SK-N-SH (cell line): ENCODE measurements at regions of chr16 and their contacts with region 1.

Region 1: GRCh38 chr16:51818342-51818944 is 667.4 kb upstream of the SALL1 start:
- DNase-seq: peak; percentile 28
- H3K4me3 ChIP-seq: peak overlapping the region in 1 of 2 experiments; percentile 49; a peak in 1 of 4 replicates
- H3K27ac ChIP-seq: no peak overlapping the region
- H3K4me1 ChIP-seq: peaks cover 0 to 3% of the 10 kb centered on the region in 2 experiments; a peak in 1 of 4 replicates
- H3K27me3 ChIP-seq: no peaks in the 10 kb centered on the region
- CTCF ChIP-seq: peak; percentile 49
- EP300 ChIP-seq: no peak
- RAD21 ChIP-seq: peak; percentile 82

Region 2: DNA sequence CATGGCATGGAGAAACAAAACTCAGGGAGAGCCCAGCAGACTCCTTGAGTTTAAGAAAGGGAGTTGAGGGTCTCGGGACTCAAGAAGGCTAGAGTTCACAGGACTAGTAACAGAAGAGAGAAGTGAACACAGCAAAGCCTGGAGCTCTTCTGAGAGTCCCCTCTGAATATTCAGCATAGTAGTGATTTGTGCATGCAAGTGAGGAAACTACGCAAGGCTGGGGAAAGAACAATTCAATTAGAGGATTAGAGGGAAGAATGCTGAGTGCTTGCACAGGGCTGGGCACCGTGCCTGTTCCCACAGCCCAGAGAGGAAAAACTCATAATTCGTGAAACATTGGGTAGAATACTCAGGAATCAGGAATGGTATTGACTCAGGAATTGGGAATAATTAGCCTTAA is 127.3 kb before region 1 on chr16:
- CTCF ChIA-PET with region 1: no interaction called
- POLR2A ChIA-PET with region 1: no interaction called
- DNase-seq: no peak
- H3K4me3 ChIP-seq: no peak overlapping the region
- H3K27ac ChIP-seq: no peak overlapping the region
- H3K4me1 ChIP-seq: no peaks in the 10 kb centered on the region
- H3K27me3 ChIP-seq: no peaks in the 10 kb centered on the region
- CTCF ChIP-seq: no peak
- EP300 ChIP-seq: no peak
- RAD21 ChIP-seq: no peak

Region 3: DNA sequence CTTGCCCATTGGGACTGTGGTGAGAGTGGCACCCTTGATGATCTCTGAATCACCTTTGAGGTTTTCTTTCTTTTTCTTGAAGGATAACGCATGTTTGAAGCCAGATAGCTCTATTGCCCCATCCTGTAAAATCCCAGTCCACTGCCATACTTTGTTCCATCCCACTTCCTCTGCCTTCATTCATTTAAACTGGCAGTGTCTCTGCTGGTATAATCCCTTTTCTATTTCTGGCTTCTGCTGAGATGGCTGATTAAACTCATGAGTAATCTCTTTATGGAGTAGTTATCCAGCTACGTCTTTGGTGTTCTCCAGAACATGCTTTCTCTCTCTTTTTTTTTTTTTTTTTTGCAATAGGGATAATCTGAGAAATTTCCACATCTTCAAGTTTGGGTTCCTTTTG is 10.9 kb before region 1 on chr16:
- CTCF ChIA-PET with region 1: interaction called, 25 read pairs
- POLR2A ChIA-PET with region 1: no interaction called
- DNase-seq: no peak
- H3K4me3 ChIP-seq: no peak overlapping the region
- H3K27ac ChIP-seq: no peak overlapping the region
- H3K4me1 ChIP-seq: no peaks in the 10 kb centered on the region
- H3K27me3 ChIP-seq: no peaks in the 10 kb centered on the region
- CTCF ChIP-seq: no peak
- EP300 ChIP-seq: no peak
- RAD21 ChIP-seq: no peak

Region 4: GRCh38 chr16:51839727-51840462 is 21.5 kb after region 1 on chr16:
- CTCF ChIA-PET with region 1: interaction called, 15 read pairs
- POLR2A ChIA-PET with region 1: no interaction called
- DNase-seq: no peak
- H3K4me3 ChIP-seq: no peak overlapping the region
- H3K27ac ChIP-seq: no peak overlapping the region
- H3K4me1 ChIP-seq: no peaks in the 10 kb centered on the region
- H3K27me3 ChIP-seq: no peaks in the 10 kb centered on the region
- CTCF ChIP-seq: no peak
- EP300 ChIP-seq: no peak
- RAD21 ChIP-seq: no peak

Region 5: DNA sequence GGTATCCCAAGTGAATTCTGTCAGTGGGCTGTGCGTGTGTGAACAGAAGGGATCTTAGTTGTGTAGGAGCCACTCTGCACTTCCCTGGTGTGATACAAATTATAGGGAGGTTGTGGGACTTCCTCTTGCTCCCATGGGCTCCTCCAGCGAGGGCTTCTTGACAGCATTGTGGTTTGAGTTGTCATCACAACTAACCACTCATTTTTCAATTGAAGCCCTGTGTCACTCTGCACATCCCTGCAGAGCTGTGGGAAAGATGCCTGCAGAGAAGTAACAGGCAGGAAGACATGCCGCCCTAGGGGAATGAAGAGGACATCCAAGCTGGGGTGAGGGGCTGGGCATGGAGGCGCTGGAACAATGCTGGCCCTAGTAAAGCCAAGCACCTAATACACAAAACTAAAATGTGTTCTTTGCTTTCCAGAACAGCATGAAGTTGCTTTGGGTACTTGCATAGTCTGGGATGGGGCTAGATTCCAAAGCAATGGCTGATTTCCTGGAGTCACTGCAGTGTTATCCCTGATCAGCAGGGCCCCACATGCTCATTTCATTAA is 36.0 kb after region 1 on chr16:
- CTCF ChIA-PET with region 1: interaction called, 10 read pairs
- POLR2A ChIA-PET with region 1: no interaction called
- DNase-seq: no peak
- H3K4me3 ChIP-seq: no peak overlapping the region
- H3K27ac ChIP-seq: no peak overlapping the region
- H3K4me1 ChIP-seq: no peaks in the 10 kb centered on the region; a peak in 1 of 4 replicates
- H3K27me3 ChIP-seq: no peaks in the 10 kb centered on the region
- CTCF ChIP-seq: no peak
- EP300 ChIP-seq: no peak
- RAD21 ChIP-seq: no peak

Region 6: GRCh38 chr16:51951668-51952298 is 133.3 kb after region 1 on chr16:
- CTCF ChIA-PET with region 1: interaction called, 19 read pairs
- POLR2A ChIA-PET with region 1: no interaction called
- DNase-seq: no peak
- H3K4me3 ChIP-seq: no peak overlapping the region
- H3K27ac ChIP-seq: peak overlapping the region in 1 of 2 experiments; percentile 11; a peak in 1 of 4 replicates
- H3K4me1 ChIP-seq: peaks cover 0 to 26% of the 10 kb centered on the region in 2 experiments; a peak in 2 of 4 replicates
- H3K27me3 ChIP-seq: no peaks in the 10 kb centered on the region
- CTCF ChIP-seq: no peak
- EP300 ChIP-seq: no peak
- RAD21 ChIP-seq: no peak

Region 7: GRCh38 chr16:51982715-51983680 is 164.6 kb after region 1 on chr16:
- CTCF ChIA-PET with region 1: interaction called, 147 read pairs
- POLR2A ChIA-PET with region 1: no interaction called
- DNase-seq: peak; percentile 48
- H3K4me3 ChIP-seq: peak overlapping the region in 1 of 2 experiments; percentile 11; a peak in 1 of 4 replicates
- H3K27ac ChIP-seq: no peak overlapping the region
- H3K4me1 ChIP-seq: no peaks in the 10 kb centered on the region; a peak in 1 of 4 replicates
- H3K27me3 ChIP-seq: no peaks in the 10 kb centered on the region
- CTCF ChIP-seq: peak; percentile 78
- EP300 ChIP-seq: no peak
- RAD21 ChIP-seq: peak; percentile 97